CD4-positive, alpha-beta T cell (primary cell): ENCODE measurements at regions of chr7 and their contacts with region 1.

Region 1: GRCh38 chr7:12067141-12067831 is 143.8 kb upstream of the TMEM106B start:
- DNase-seq: peak; percentile 23 to 79 (median 46)
- ATAC-seq: peak; percentile 64
- H3K4me3 ChIP-seq: no peak overlapping the region
- H3K4me3 Mint-ChIP-seq: no peak overlapping the region
- H3K27ac ChIP-seq: no peak overlapping the region
- H3K27ac Mint-ChIP-seq: no peak overlapping the region
- H3K4me1 ChIP-seq: no peaks in the 10 kb centered on the region
- H3K4me1 Mint-ChIP-seq: no peaks in the 10 kb centered on the region
- H3K27me3 ChIP-seq: no peaks in the 10 kb centered on the region
- H3K27me3 Mint-ChIP-seq: no peaks in the 10 kb centered on the region
- CTCF ChIP-seq: peak; percentile 79

Region 2: DNA sequence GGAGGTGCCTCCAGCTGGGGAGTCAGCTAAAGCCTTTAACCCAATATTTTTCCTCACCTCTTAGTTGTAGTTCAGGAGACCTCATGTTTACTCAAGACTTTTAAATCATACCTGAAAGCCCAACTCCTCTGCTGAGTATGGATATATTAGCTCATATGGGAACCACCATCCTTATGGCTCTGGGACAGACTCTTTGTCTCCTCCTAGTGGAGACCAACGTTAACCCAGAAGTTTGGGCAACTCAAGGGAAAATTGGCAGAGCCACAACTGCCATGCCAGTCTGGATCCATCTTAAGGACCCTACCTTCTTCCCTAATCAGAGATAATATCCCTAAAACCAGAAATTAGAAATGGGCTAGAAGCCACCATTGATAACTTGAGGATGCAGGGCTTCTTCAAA is 224.6 kb after region 1 on chr7:
- CTCF ChIA-PET with region 1: no interaction called
- POLR2A ChIA-PET with region 1: no interaction called
- intact Hi-C with region 1: loop called in 1 of 2 experiments (anchors 1 kb)
- DNase-seq: peak in 4 of 14 experiments; percentile 6 to 40 (median 18)
- ATAC-seq: no peak
- H3K4me3 ChIP-seq: no peak overlapping the region
- H3K4me3 Mint-ChIP-seq: no peak overlapping the region
- H3K27ac ChIP-seq: no peak overlapping the region
- H3K27ac Mint-ChIP-seq: no peak overlapping the region
- H3K4me1 ChIP-seq: no peaks in the 10 kb centered on the region
- H3K4me1 Mint-ChIP-seq: no peaks in the 10 kb centered on the region
- H3K27me3 ChIP-seq: no peaks in the 10 kb centered on the region
- H3K27me3 Mint-ChIP-seq: peaks cover 5% of the 10 kb centered on the region
- CTCF ChIP-seq: peak; percentile 17